ENCODE measurements at regions of chr7 and their contacts with region 1.

Region 1: DNA sequence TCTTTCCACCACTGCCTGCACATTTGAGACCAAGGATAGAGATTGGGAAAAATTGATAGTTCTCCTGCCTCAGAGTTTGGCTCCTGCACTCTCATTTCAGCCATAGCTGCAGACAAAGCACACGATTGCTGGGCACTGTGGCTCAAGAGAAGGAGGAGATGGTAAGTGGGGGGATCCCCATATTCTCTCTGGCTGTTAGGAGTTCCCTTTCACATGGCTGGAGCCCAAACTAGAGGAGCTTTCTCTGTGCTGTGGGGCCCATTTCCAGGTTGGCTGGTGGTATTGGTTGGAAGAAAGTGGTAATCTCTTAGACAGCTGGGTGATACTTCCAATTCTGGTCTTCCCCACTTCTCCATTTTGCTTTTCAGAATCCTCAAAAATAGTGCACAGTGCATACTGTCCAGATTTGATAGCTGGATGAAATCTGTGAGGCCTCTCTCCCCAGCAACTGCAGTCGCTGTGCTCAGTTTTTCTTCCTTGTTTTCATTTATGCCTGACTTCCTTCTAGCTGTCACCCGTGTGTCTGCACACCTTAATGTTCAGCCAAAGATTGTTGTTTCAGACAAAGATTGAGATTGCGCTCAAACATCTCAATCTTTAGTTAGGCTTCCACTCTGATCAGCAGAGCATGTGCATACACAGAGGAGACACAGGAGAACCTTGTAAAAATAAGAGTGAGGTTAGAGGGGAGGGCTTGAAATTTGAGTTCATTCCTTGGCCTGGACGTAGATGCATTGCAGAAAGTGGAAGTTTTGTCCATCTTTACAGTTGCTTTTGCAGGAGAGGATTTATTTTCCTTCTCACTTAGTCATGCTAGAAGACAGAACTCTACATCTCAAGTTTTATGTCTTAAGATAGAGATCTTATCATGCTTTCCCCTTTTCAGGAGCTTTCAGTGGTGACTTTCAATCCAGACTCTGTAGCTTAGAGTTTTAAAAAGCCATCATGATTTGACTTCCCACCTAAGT is 28.6 kb downstream of the RABGEF1 start:
- DNase-seq: no peak
- H3K4me3 ChIP-seq: no peak overlapping the region
- H3K27ac ChIP-seq: no peak overlapping the region
- H3K4me1 ChIP-seq: peaks cover 5% of the 10 kb centered on the region
- H3K27me3 ChIP-seq: no peaks in the 10 kb centered on the region
- CTCF ChIP-seq: no peak
- EP300 ChIP-seq: no peak
- POLR2A ChIP-seq: no peak

Region 2: GRCh38 chr7:66707825-66708224 is 61.3 kb before region 1 on chr7:
- intact Hi-C with region 1: no loop called
- DNase-seq: no peak
- H3K4me3 ChIP-seq: no peak overlapping the region
- H3K27ac ChIP-seq: no peak overlapping the region
- H3K4me1 ChIP-seq: no peaks in the 10 kb centered on the region
- H3K27me3 ChIP-seq: no peaks in the 10 kb centered on the region
- CTCF ChIP-seq: no peak
- EP300 ChIP-seq: no peak
- POLR2A ChIP-seq: no peak

Region 3: DNA sequence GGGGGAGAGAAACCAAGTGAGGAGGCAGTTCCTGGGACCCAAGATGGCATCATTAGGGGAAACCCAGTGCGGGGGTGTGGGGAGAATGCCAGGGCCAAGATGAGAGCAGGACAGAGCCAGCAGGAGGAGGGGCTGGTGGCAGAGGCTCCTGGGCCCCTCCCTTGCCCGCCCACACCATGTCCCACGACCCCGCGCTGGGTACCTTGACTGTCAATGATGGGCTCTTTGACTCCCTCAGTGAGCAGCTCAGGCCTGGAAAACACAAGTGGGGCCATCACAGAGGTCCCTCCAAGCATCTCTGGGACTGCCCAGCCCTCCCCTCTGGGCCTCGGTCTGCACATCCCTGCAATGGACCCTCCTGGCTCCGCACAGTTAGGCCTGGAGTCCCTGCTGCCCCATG is 46.8 kb after region 1 on chr7:
- intact Hi-C with region 1: loop called in 1 of 4 experiments (anchors 10 kb)
- DNase-seq: no peak
- H3K4me3 ChIP-seq: no peak overlapping the region
- H3K27ac ChIP-seq: no peak overlapping the region
- H3K4me1 ChIP-seq: no peaks in the 10 kb centered on the region
- H3K27me3 ChIP-seq: no peaks in the 10 kb centered on the region
- CTCF ChIP-seq: no peak
- EP300 ChIP-seq: no peak
- POLR2A ChIP-seq: no peak

Measured in ovary (tissue), 10 donors.